ENCODE measurements at regions of chr20 and their contacts with region 1.

Region 1: GRCh38 chr20:23350196-23350903 is at the start of gene NXT1:
- DNase-seq: peak; percentile 95 to 98
- ATAC-seq: peak; percentile 78 to 92 (median 81)
- H3K4me3 ChIP-seq: peak within 1 kb of the TSS; percentile 59
- H3K4me3 Mint-ChIP-seq: peak within 1 kb of the TSS; percentile 98
- H3K27ac ChIP-seq: peak within 1 kb of the TSS; percentile 98
- H3K27ac Mint-ChIP-seq: peak within 1 kb of the TSS; percentile 100
- H3K4me1 ChIP-seq: peaks cover 19% of the 10 kb centered on the region
- H3K4me1 Mint-ChIP-seq: peaks cover 26% of the 10 kb centered on the region in 2 donors
- H3K27me3 ChIP-seq: no peaks in the 10 kb centered on the region
- H3K27me3 Mint-ChIP-seq: no peaks in the 10 kb centered on the region
- CTCF ChIP-seq: no peak
- total RNA-seq, gene NXT1: 47.4 to 61.8 (median 56.3) TPM

Region 2: DNA sequence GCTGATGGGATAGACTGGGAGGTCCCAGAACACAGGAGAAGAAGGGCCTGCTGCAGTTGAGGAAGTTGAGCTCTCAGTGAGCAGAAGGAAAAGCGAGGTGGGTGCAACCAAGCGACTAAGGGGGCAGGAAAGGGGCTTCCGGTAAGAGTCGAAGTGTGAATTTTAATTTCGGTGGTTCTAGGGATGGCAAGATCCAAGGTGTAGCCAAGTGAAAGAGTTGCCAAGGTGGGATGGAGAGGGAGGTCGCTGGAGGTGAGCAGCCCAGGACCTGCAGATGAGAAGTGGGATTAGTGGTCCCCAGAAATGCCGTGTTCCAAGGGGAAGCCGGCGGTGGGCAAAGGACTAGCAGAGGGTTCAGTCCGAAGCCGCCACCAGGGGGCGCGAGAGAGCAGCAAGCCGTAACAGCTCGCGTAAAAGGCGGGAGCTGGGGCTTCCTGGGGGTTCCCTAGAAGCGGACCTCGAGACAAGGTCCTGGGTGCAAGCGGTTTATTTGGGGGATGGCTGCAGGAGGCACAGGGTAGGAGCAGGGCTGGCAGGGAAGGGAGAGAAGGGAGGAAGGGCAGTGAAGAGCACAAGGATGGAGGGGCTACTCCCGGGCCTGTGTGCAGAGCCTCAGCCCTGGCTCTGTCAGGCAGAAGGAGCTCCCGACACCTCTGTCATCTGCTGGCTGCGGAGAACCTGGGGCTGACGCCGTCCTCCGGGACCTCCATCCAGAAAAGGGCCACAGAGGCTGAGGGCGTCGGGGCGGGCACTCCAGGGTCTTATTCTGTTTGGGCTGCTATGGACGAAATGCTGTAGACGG is 1541.3 kb before region 1 on chr20:
- intact Hi-C with region 1: loop called (anchors 10 kb)
- DNase-seq: peak in 1 of 2 donors; percentile 17
- ATAC-seq: no peak
- H3K4me3 ChIP-seq: no peak overlapping the region
- H3K4me3 Mint-ChIP-seq: no peak overlapping the region
- H3K27ac ChIP-seq: no peak overlapping the region
- H3K27ac Mint-ChIP-seq: no peak overlapping the region
- H3K4me1 ChIP-seq: no peaks in the 10 kb centered on the region
- H3K4me1 Mint-ChIP-seq: peaks cover 0 to 8% of the 10 kb centered on the region in 2 donors
- H3K27me3 ChIP-seq: no peaks in the 10 kb centered on the region
- H3K27me3 Mint-ChIP-seq: no peaks in the 10 kb centered on the region
- CTCF ChIP-seq: peak; percentile 54

Region 3: GRCh38 chr20:23361598-23362384 is 11.4 kb after region 1 on chr20 and contains the start of gene GZF1:
- intact Hi-C with region 1: loop called (anchors 1 kb)
- DNase-seq: peak; percentile 99
- ATAC-seq: peak; percentile 75 to 91 (median 77)
- H3K4me3 ChIP-seq: peak within 1 kb of the TSS; percentile 90
- H3K4me3 Mint-ChIP-seq: peak within 1 kb of the TSS; percentile 98
- H3K27ac ChIP-seq: peak within 1 kb of the TSS; percentile 99
- H3K27ac Mint-ChIP-seq: peak within 1 kb of the TSS; percentile 98
- H3K4me1 ChIP-seq: peaks cover 45% of the 10 kb centered on the region
- H3K4me1 Mint-ChIP-seq: peaks cover 54 to 64% of the 10 kb centered on the region in 2 donors
- H3K27me3 ChIP-seq: no peaks in the 10 kb centered on the region
- H3K27me3 Mint-ChIP-seq: no peaks in the 10 kb centered on the region
- CTCF ChIP-seq: no peak
- total RNA-seq, gene GZF1: 45.1 to 56.6 (median 45.9) TPM

Region 4: GRCh38 chr20:23420943-23421931 is 70.9 kb after region 1 on chr20 and contains the start of gene NAPB:
- intact Hi-C with region 1: loop called (anchors 1 kb)
- DNase-seq: peak; percentile 91 to 95
- ATAC-seq: peak; percentile 98 to 99 (median 99)
- H3K4me3 ChIP-seq: peak within 1 kb of the TSS; percentile 93
- H3K4me3 Mint-ChIP-seq: peak within 1 kb of the TSS; percentile 96
- H3K27ac ChIP-seq: peak within 1 kb of the TSS; percentile 71
- H3K27ac Mint-ChIP-seq: peak within 1 kb of the TSS; percentile 90 to 95
- H3K4me1 ChIP-seq: peaks cover 14% of the 10 kb centered on the region
- H3K4me1 Mint-ChIP-seq: peaks cover 37 to 43% of the 10 kb centered on the region in 2 donors
- H3K27me3 ChIP-seq: no peaks in the 10 kb centered on the region
- H3K27me3 Mint-ChIP-seq: peaks cover 0 to 10% of the 10 kb centered on the region in 2 donors
- CTCF ChIP-seq: peak; percentile 33
- total RNA-seq, gene NAPB: 22.8 to 23.9 (median 22.9) TPM

Region 5: GRCh38 chr20:23456409-23456808 is 106.1 kb after region 1 on chr20:
- intact Hi-C with region 1: loop called (anchors 2 kb)
- DNase-seq: peak; percentile 54 to 55
- ATAC-seq: peak; percentile 78 to 91 (median 86)
- H3K4me3 ChIP-seq: no peak overlapping the region
- H3K4me3 Mint-ChIP-seq: peak overlapping the region; percentile 88
- H3K27ac ChIP-seq: peak overlapping the region; percentile 93
- H3K27ac Mint-ChIP-seq: peak overlapping the region in 1 of 2 donors; percentile 97
- H3K4me1 ChIP-seq: peaks cover 36% of the 10 kb centered on the region
- H3K4me1 Mint-ChIP-seq: peaks cover 46 to 48% of the 10 kb centered on the region in 2 donors
- H3K27me3 ChIP-seq: no peaks in the 10 kb centered on the region
- H3K27me3 Mint-ChIP-seq: no peaks in the 10 kb centered on the region
- CTCF ChIP-seq: no peak

Region 6: GRCh38 chr20:23606652-23607049 is 256.3 kb after region 1 on chr20:
- intact Hi-C with region 1: loop called (anchors 5 kb)
- DNase-seq: peak; percentile 75 to 76
- ATAC-seq: peak; percentile 87 to 100 (median 100)
- H3K4me3 ChIP-seq: no peak overlapping the region
- H3K4me3 Mint-ChIP-seq: no peak overlapping the region
- H3K27ac ChIP-seq: no peak overlapping the region
- H3K27ac Mint-ChIP-seq: peak overlapping the region in 1 of 2 donors; percentile 29
- H3K4me1 ChIP-seq: peaks cover 17% of the 10 kb centered on the region
- H3K4me1 Mint-ChIP-seq: peaks cover 11 to 12% of the 10 kb centered on the region in 2 donors
- H3K27me3 ChIP-seq: no peaks in the 10 kb centered on the region
- H3K27me3 Mint-ChIP-seq: peaks cover 6% of the 10 kb centered on the region in 2 donors
- CTCF ChIP-seq: peak; percentile 82